Lower leg skin (tissue), 4 donors: ENCODE measurements at regions of chr14 and their contacts with region 1.

Region 1: GRCh38 chr14:98775892-98776291 is 496.1 kb downstream of the BCL11B start:
- DNase-seq: no peak
- H3K4me3 ChIP-seq: no peak overlapping the region
- CTCF ChIP-seq: no peak
- POLR2A ChIP-seq: no peak

Region 2: DNA sequence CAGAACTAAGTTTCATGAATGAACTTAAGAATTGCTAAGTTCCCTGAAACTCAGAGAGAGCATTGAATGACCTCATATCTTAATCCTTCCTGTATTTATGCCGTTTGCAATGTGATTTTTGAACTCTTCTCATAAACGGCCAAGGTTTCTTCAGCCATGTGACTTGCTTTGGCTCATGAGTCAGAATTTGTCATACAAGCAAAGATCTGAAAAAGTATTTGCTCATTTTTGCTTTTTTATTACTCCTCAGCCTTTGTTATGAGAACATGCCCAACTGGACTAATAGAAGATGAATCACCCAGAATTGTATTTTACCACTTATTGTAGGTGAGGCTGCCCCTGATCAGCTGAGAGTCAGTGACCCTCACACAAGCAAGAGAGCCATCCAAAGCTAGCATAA is 197.7 kb before region 1 on chr14:
- intact Hi-C with region 1: no loop called
- DNase-seq: no peak
- H3K4me3 ChIP-seq: no peak overlapping the region
- CTCF ChIP-seq: no peak
- POLR2A ChIP-seq: no peak

Region 3: GRCh38 chr14:98651042-98651441 is 124.8 kb before region 1 on chr14:
- intact Hi-C with region 1: no loop called
- DNase-seq: no peak
- H3K4me3 ChIP-seq: no peak overlapping the region
- CTCF ChIP-seq: no peak
- POLR2A ChIP-seq: no peak

Region 4: DNA sequence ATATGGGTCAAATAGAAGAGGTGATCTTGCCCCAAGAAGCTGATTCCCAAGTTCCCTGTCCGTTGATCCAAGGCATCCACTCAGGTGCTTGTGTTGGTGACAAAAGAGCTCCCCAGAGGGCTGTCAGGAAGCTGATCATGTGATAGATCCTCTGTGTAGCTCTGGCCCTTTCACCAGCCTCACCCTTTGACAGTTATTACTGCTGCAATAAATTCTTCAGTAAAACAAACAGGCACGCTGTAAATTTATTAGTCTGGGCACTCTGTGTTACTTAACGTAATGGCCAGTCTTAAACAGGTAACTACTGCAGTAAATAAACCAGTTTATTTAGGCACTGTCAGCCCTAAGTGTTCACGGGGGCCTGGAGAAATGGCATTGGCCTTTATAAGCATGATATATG is 22.2 kb after region 1 on chr14:
- intact Hi-C with region 1: loop called (anchors 1 kb)
- DNase-seq: no peak
- H3K4me3 ChIP-seq: no peak overlapping the region
- CTCF ChIP-seq: no peak
- POLR2A ChIP-seq: no peak

Region 5: DNA sequence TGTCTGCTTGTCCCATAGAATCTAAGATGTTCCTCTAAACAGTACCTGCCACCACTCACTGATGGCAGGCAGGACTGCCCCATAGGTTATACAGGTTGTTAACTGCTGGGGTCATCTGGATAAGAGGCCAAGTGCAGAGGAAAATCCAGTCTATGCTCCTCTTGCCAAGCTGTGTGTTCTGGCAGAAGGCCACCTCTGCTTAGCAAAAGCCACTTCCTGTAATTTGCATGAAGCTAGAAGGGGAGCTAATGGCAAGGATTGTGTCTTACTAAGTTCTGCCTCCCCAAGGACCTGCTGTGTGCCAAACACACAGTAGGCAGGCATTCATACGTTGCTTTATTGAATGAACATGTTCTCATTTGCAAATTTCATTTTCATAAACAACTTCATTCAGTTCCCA is 50.7 kb after region 1 on chr14:
- intact Hi-C with region 1: no loop called
- DNase-seq: no peak
- H3K4me3 ChIP-seq: no peak overlapping the region
- CTCF ChIP-seq: no peak
- POLR2A ChIP-seq: no peak

Region 6: DNA sequence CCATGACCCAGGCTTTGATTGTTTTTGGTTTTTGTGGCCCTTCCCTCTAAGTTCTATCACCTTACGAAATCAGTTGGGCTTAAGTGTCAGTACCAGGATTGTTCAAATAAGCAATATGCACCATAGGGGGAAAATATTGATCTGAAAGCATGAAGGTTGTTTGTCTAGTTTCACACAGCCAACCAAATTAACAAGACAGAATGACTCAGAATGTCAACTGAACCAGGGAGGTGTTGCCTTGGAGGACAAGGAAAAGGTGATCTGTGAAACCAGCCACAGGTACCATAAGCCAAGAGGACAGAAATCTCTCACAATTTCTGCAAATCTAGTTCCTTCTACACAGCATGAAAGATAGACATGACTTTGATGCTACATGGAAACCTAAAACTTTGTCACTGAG is 198.2 kb after region 1 on chr14:
- intact Hi-C with region 1: no loop called
- DNase-seq: no peak
- H3K4me3 ChIP-seq: no peak overlapping the region
- CTCF ChIP-seq: no peak
- POLR2A ChIP-seq: no peak